Mucosa of descending colon (tissue), 3 donors: ENCODE measurements at regions of chr19 and their contacts with region 1.

Region 1: GRCh38 chr19:23969630-23970029 is 54.9 kb downstream of the ZNF726 start:
- DNase-seq: no peak
- ATAC-seq: no peak
- H3K4me3 ChIP-seq: no peak overlapping the region
- H3K4me1 ChIP-seq: no peaks in the 10 kb centered on the region
- CTCF ChIP-seq: no peak

Region 2: GRCh38 chr19:23872282-23872919 is 97.2 kb before region 1 on chr19:
- intact Hi-C with region 1: loop called in 1 of 2 experiments (anchors 5 kb)
- DNase-seq: no peak
- ATAC-seq: no peak
- H3K4me3 ChIP-seq: no peak overlapping the region
- H3K4me1 ChIP-seq: no peaks in the 10 kb centered on the region
- CTCF ChIP-seq: no peak